ENCODE measurements at regions of chr6 and their contacts with region 1.

Region 1: GRCh38 chr6:151370509-151371078 is 20.8 kb downstream of the ZBTB2 start:
- DNase-seq: peak; percentile 42
- H3K4me3 ChIP-seq: no peak overlapping the region
- H3K27ac ChIP-seq: no peak overlapping the region
- H3K4me1 ChIP-seq: peaks cover 25% of the 10 kb centered on the region
- H3K27me3 ChIP-seq: no peaks in the 10 kb centered on the region
- CTCF ChIP-seq: peak; percentile 9 to 21
- POLR2A ChIP-seq: no peak

Region 2: GRCh38 chr6:151357758-151358436 is 12.7 kb before region 1 on chr6:
- CTCF ChIA-PET with region 1: interaction called, 9 read pairs
- POLR2A ChIA-PET with region 1: no interaction called
- dilution Hi-C with region 1: no loop called
- intact Hi-C with region 1: loop called (anchors 2 kb)
- DNase-seq: peak; percentile 57
- H3K4me3 ChIP-seq: no peak overlapping the region
- H3K27ac ChIP-seq: no peak overlapping the region
- H3K4me1 ChIP-seq: peaks cover 15% of the 10 kb centered on the region
- H3K27me3 ChIP-seq: no peaks in the 10 kb centered on the region
- CTCF ChIP-seq: no peak
- POLR2A ChIP-seq: no peak

Region 3: GRCh38 chr6:152039217-152039616 is 668.6 kb after region 1 on chr6:
- CTCF ChIA-PET with region 1: no interaction called
- POLR2A ChIA-PET with region 1: no interaction called
- dilution Hi-C with region 1: no loop called
- intact Hi-C with region 1: no loop called
- DNase-seq: no peak
- H3K4me3 ChIP-seq: no peak overlapping the region
- H3K27ac ChIP-seq: no peak overlapping the region
- H3K4me1 ChIP-seq: no peaks in the 10 kb centered on the region
- H3K27me3 ChIP-seq: no peaks in the 10 kb centered on the region
- CTCF ChIP-seq: no peak
- POLR2A ChIP-seq: no peak